GM13977 (cell line): ENCODE measurements at regions of chr10 and their contacts with region 1.

Region 1: GRCh38 chr10:89217057-89217990 is 10.2 kb upstream of the CH25H start:
- DNase-seq: peak; percentile 40
- CTCF ChIP-seq: peak; percentile 66

Region 2: GRCh38 chr10:87794285-87794684 is 1423.0 kb before region 1 on chr10:
- in situ Hi-C with region 1: no loop called
- DNase-seq: no peak
- CTCF ChIP-seq: no peak

Region 3: GRCh38 chr10:88835096-88835909 is 382.0 kb before region 1 on chr10:
- in situ Hi-C with region 1: loop called (anchors 10 kb)
- DNase-seq: peak; percentile 38
- CTCF ChIP-seq: peak; percentile 87

Region 4: DNA sequence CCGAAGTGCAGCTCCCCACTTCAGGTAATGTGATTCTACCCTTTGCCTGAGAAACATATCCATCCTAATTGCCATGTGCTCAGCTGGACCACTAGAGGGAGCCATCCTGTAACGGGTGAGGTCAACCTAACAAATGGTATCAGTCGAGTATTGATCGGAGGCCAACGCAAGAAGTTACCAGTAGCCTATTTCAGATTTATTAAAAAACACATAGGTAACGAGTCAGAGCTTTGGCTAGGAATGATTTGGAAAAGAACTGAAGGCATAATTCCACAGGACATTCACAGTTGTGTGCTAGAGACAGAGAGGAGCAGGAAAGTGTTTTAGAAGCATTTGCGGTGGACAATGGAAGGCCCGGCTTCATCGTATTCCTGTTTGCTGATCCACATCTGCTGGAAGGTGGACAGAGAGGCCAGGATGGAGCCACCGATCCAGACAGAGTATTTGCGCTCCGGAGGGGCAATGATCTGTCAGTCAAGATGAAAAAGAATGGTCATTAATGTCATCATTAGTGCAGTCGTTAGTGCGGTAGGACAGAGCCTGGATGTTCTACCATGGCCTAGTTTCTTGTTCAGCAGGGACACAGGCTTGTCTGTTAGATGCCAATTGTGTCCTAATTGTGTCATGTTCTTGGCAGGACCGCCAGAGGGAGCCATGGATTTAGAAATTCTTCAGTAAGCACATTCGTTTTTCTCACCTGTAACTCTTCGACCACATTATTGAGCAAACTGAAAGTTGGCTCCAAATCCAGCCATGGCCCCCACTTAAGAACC is 282.2 kb before region 1 on chr10:
- in situ Hi-C with region 1: loop called (anchors 5 kb)
- DNase-seq: peak; percentile 31
- CTCF ChIP-seq: peak; percentile 92

Region 5: GRCh38 chr10:89029785-89030437 is 187.4 kb before region 1 on chr10:
- in situ Hi-C with region 1: loop called (anchors 10 kb)
- DNase-seq: peak; percentile 34
- CTCF ChIP-seq: peak; percentile 70

Region 6: DNA sequence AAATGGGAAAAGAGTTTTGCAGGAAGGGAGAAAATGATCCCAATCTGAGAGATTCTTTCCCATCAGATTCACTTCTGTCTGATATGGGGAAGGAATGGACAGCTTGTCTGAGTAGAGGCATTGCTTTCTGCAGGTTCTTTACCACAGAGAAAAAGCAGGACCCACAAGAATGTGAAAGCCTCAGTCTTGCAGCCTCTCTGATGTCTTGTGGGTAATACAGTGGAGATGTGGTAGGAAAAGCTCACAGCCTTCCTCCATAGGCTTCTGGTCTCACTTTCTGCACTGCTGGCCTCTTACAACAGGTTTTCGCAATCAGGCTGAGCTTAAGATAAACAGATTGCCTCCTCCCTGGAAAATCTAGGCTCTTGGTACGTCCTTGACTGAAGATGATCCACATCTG is 175.7 kb after region 1 on chr10:
- in situ Hi-C with region 1: no loop called
- DNase-seq: no peak
- CTCF ChIP-seq: no peak